ENCODE measurements at regions of chr2 and their contacts with region 1.

Region 1: GRCh38 chr2:230411570-230412370 is 4.2 kb upstream of the SP100 start:
- DNase-seq: peak; percentile 61
- ATAC-seq: peak; percentile 67
- H3K4me3 Mint-ChIP-seq: peak overlapping the region; percentile 99
- H3K27ac Mint-ChIP-seq: peak overlapping the region; percentile 99
- H3K4me1 Mint-ChIP-seq: peaks cover 74% of the 10 kb centered on the region
- H3K27me3 Mint-ChIP-seq: no peaks in the 10 kb centered on the region
- CTCF ChIP-seq: no peak

Region 2: DNA sequence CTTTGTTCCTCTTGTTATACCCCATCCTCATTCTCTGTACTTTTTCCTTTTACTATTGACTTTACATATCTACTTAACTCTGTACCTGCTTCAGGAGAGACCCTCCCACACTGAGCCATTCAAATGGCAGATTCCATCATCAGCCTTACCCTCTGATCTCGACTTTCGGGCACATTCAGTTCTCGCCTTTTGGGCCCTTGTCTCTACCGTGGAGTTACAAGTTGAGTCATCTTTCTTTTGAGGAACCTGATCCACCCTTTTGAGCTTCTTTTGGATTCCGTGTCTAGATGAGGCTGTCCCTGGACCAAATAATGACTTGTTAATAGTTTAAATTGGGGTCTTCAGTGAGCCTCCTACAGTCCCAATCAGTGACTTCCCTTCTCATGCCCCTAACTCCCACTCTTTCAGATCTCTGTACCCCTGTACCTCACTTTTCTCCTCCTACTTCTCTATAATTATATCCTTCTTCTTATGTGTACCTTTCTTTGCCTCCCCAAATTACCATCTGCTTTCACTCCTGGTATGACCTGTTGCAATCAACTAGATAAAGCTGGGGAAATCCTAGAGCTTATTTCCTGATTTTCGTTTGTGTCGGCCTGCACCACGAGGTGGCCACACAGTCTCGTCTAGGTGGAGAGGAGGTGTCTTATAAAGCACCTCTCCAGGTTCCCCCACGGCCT is 209.2 kb before region 1 on chr2:
- CTCF ChIA-PET with region 1: interaction called, 3 read pairs
- POLR2A ChIA-PET with region 1: interaction called, 8 read pairs
- intact Hi-C with region 1: loop called (anchors 2 kb)
- DNase-seq: peak; percentile 39
- ATAC-seq: peak; percentile 70
- H3K4me3 Mint-ChIP-seq: peak overlapping the region; percentile 76
- H3K27ac Mint-ChIP-seq: peak overlapping the region; percentile 87
- H3K4me1 Mint-ChIP-seq: peaks cover 42% of the 10 kb centered on the region
- H3K27me3 Mint-ChIP-seq: no peaks in the 10 kb centered on the region
- CTCF ChIP-seq: no peak

Region 3: GRCh38 chr2:230234845-230235244 is 176.9 kb before region 1 on chr2:
- CTCF ChIA-PET with region 1: no interaction called
- POLR2A ChIA-PET with region 1: no interaction called
- intact Hi-C with region 1: no loop called
- DNase-seq: no peak
- ATAC-seq: peak; percentile 56
- H3K4me3 Mint-ChIP-seq: peak overlapping the region; percentile 66
- H3K27ac Mint-ChIP-seq: peak overlapping the region; percentile 84
- H3K4me1 Mint-ChIP-seq: peaks cover 64% of the 10 kb centered on the region
- H3K27me3 Mint-ChIP-seq: no peaks in the 10 kb centered on the region
- CTCF ChIP-seq: no peak

Region 4: DNA sequence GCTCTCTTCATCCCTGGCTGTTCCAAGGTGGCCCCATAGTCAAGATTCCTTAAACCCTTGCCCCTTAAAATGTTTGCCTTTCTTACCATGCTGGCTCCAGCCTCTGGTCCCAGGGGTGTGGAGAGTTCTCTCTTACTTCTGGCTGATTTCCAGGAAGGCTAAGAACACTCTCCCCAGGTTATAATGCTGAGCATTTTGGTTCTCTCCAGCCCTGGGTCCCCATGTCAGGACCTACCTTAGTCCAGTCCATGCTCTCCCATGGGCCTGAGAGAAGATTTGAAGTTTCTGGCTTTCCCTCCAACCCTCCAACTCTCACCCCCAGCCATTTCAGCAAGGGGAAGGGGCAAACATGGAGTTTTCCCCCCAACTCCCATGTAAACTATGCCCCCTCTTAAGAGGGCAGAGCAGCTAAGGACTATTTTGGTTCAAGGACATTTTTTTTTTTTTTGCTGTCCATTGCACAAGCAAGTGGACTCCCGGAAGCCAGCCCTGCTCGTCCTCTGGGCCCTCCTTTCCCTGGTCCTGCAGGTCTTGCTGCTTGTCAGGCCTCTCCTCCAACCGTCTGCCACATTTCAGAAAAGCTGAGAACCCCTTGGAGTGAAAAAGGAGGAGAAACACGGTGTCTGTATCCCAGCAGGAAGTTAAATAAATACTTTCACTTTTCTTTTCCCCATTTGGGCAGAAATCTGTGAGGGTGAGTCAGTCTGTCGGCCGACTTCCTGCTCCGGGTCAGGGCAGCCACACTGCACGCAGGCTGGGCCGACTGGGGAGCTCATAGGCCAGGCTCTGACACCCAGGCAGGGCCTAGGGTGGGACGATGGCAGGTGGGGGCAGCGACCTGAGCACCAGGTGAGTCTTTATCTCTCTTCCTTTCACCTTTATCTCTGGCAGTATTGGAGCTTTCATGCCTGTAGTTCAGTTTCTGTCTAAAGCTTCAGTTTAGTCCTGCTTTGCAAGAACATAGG is 85.0 kb before region 1 on chr2 and contains the start of gene SP140L:
- CTCF ChIA-PET with region 1: no interaction called
- POLR2A ChIA-PET with region 1: interaction called, 16 read pairs
- intact Hi-C with region 1: loop called (anchors 2 kb)
- DNase-seq: peak; percentile 60
- ATAC-seq: peak; percentile 95
- H3K4me3 Mint-ChIP-seq: peak within 1 kb of the TSS; percentile 96
- H3K27ac Mint-ChIP-seq: peak within 1 kb of the TSS; percentile 99
- H3K4me1 Mint-ChIP-seq: peaks cover 79% of the 10 kb centered on the region
- H3K27me3 Mint-ChIP-seq: no peaks in the 10 kb centered on the region
- CTCF ChIP-seq: no peak
- total RNA-seq, gene SP140L: 106 and 112 TPM in 2 replicates

Region 5: GRCh38 chr2:230377071-230377470 is 34.7 kb before region 1 on chr2:
- CTCF ChIA-PET with region 1: no interaction called
- POLR2A ChIA-PET with region 1: no interaction called
- intact Hi-C with region 1: no loop called
- DNase-seq: no peak
- ATAC-seq: no peak
- H3K4me3 Mint-ChIP-seq: no peak overlapping the region
- H3K27ac Mint-ChIP-seq: no peak overlapping the region
- H3K4me1 Mint-ChIP-seq: no peaks in the 10 kb centered on the region
- H3K27me3 Mint-ChIP-seq: no peaks in the 10 kb centered on the region
- CTCF ChIP-seq: no peak

Region 6: DNA sequence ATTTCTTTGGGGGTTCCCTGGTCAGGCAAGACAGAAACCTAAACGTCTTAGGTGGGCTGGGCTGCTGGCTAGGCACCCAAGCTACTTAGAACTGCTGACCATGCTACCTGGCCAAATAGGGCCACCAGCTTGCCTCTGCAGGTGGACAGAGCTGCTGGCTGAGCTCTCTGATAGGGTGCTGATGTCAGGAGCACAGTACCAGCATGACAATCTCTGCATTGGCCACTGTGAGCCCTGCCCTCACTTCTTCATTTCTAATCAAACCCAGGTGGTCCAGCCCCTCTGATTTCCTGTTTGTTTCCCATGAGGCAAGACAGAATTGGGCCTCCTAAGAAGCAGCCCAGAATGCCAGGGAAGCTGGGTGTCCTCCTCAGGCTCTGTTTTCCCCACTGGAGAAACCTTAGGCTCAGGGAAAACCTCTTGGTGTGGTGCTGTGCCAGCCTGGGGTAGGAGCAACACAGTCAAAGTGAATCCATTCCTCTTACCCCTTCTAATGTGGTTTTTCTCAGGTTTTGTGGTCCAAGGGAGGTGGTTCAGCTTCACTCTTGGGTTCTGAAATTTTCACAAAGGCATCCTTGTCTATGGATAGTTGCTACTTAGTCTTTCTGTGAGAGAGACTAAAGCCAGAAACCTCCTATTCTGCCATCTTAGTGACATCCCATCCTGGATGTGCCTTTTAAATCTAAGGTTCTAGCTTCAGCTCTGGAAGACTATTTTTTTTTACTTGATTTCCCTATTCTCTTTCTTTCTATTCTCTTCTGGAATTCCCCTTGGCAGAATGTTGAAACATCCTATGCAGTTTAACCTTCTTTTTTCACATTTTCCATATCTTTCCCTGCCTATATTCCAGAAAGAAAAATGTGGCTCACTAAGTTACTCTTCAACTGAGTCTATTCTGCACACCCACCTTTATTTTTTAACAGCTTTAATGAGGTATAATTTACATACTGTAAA is 19.5 kb after region 1 on chr2:
- CTCF ChIA-PET with region 1: no interaction called
- POLR2A ChIA-PET with region 1: interaction called, 8 read pairs
- intact Hi-C with region 1: loop called (anchors 1 kb)
- DNase-seq: no peak
- ATAC-seq: peak; percentile 71
- H3K4me3 Mint-ChIP-seq: peak overlapping the region; percentile 17
- H3K27ac Mint-ChIP-seq: peak overlapping the region; percentile 77
- H3K4me1 Mint-ChIP-seq: peaks cover 74% of the 10 kb centered on the region
- H3K27me3 Mint-ChIP-seq: no peaks in the 10 kb centered on the region
- CTCF ChIP-seq: no peak

Region 7: GRCh38 chr2:230447455-230448451 is 36.0 kb after region 1 on chr2:
- CTCF ChIA-PET with region 1: no interaction called
- POLR2A ChIA-PET with region 1: interaction called, 47 read pairs
- intact Hi-C with region 1: loop called (anchors 1 kb)
- DNase-seq: no peak
- ATAC-seq: peak; percentile 81
- H3K4me3 Mint-ChIP-seq: peak overlapping the region; percentile 83
- H3K27ac Mint-ChIP-seq: peak overlapping the region; percentile 99
- H3K4me1 Mint-ChIP-seq: peaks cover 93% of the 10 kb centered on the region
- H3K27me3 Mint-ChIP-seq: no peaks in the 10 kb centered on the region
- CTCF ChIP-seq: no peak

Region 8: GRCh38 chr2:230589497-230590015 is 177.8 kb after region 1 on chr2:
- CTCF ChIA-PET with region 1: no interaction called
- POLR2A ChIA-PET with region 1: interaction called, 15 read pairs
- intact Hi-C with region 1: no loop called
- DNase-seq: peak; percentile 55
- ATAC-seq: peak; percentile 97
- H3K4me3 Mint-ChIP-seq: peak overlapping the region; percentile 59
- H3K27ac Mint-ChIP-seq: peak overlapping the region; percentile 95
- H3K4me1 Mint-ChIP-seq: peaks cover 83% of the 10 kb centered on the region
- H3K27me3 Mint-ChIP-seq: no peaks in the 10 kb centered on the region
- CTCF ChIP-seq: no peak

Measured in activated B cell treated with CpG ODN at 0.5 μM for 24 hours (primary cell).